Heart left ventricle (tissue), 16 donors: ENCODE measurements at regions of chrX and their contacts with region 1.

Region 1: GRCh38 chrX:15493118-15493962 is at the start of gene PIR:
- DNase-seq: peak; percentile 86 to 92 (median 91)
- ATAC-seq: peak; percentile 98 to 100 (median 99)
- H3K4me3 ChIP-seq: peak within 1 kb of the TSS; percentile 28 to 84 (median 68)
- H3K27ac ChIP-seq: peak within 1 kb of the TSS; percentile 40 to 86 (median 78)
- H3K4me1 ChIP-seq: peaks cover 0 to 15% (median 2%) of the 10 kb centered on the region in 12 donors
- H3K27me3 ChIP-seq: peaks cover 0 to 34% (median 0%) of the 10 kb centered on the region in 9 donors
- CTCF ChIP-seq: peak; percentile 5 to 54 (median 32)
- POLR2A ChIP-seq: peak in 1 of 2 donors; percentile 81
- total RNA-seq, gene PIR: 6.9 to 19.9 (median 12.0) TPM

Region 2: GRCh38 chrX:15299941-15300851 is 193.1 kb before region 1 on chrX:
- intact Hi-C with region 1: no loop called
- DNase-seq: no peak
- ATAC-seq: no peak
- H3K4me3 ChIP-seq: peak overlapping the region in 3 of 12 donors; percentile 3 to 13 (median 6)
- H3K27ac ChIP-seq: peak overlapping the region in 10 of 12 donors; percentile 38 to 82 (median 79)
- H3K4me1 ChIP-seq: peaks cover 0 to 39% (median 14%) of the 10 kb centered on the region in 12 donors
- H3K27me3 ChIP-seq: no peaks in the 10 kb centered on the region
- CTCF ChIP-seq: peak; percentile 17 to 58 (median 42)
- POLR2A ChIP-seq: no peak

Region 3: GRCh38 chrX:15564981-15565579 is 71.7 kb after region 1 on chrX:
- intact Hi-C with region 1: loop called (anchors 1 to 10 kb)
- DNase-seq: peak; percentile 33 to 54 (median 52)
- ATAC-seq: peak; percentile 58 to 95 (median 92)
- H3K4me3 ChIP-seq: no peak overlapping the region
- H3K27ac ChIP-seq: no peak overlapping the region
- H3K4me1 ChIP-seq: peaks cover 0 to 10% (median 0%) of the 10 kb centered on the region in 12 donors
- H3K27me3 ChIP-seq: peaks cover 0 to 64% (median 0%) of the 10 kb centered on the region in 9 donors
- CTCF ChIP-seq: peak; percentile 29 to 67 (median 57)
- POLR2A ChIP-seq: no peak

Region 4: GRCh38 chrX:15645258-15645657 is 151.9 kb after region 1 on chrX:
- intact Hi-C with region 1: loop called in 8 of 10 experiments (anchors 5 to 10 kb)
- DNase-seq: no peak
- ATAC-seq: no peak
- H3K4me3 ChIP-seq: no peak overlapping the region
- H3K27ac ChIP-seq: no peak overlapping the region
- H3K4me1 ChIP-seq: no peaks in the 10 kb centered on the region
- H3K27me3 ChIP-seq: peaks cover 0 to 73% (median 0%) of the 10 kb centered on the region in 9 donors
- CTCF ChIP-seq: peak in 1 of 12 donors; percentile 9
- POLR2A ChIP-seq: no peak

Region 5: DNA sequence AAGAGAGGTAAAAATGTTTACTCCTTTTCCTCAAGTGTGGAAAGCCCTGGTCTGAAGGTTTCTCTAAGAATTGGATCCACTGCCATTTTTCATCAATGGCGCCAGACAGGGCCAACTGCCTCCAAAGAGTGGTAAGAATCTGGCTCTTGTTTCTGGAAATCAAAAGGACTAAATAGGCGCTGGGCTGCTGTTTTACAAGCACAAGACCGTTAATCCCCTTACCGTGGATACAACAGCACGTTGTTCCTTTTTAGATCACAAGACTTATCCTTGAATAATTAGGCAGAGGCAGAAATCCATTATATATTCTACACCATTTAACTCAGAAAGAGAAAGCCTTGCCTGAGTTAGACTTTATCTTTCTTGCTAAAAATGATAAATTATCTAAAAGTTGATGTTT is 160.6 kb after region 1 on chrX:
- intact Hi-C with region 1: loop called in 8 of 10 experiments (anchors 5 to 10 kb)
- DNase-seq: no peak
- ATAC-seq: no peak
- H3K4me3 ChIP-seq: no peak overlapping the region
- H3K27ac ChIP-seq: no peak overlapping the region
- H3K4me1 ChIP-seq: no peaks in the 10 kb centered on the region
- H3K27me3 ChIP-seq: peaks cover 0 to 67% (median 0%) of the 10 kb centered on the region in 9 donors
- CTCF ChIP-seq: no peak
- POLR2A ChIP-seq: no peak